Heart right ventricle (tissue), 16 donors: ENCODE measurements at regions of chr1 and their contacts with region 1.

Region 1: DNA sequence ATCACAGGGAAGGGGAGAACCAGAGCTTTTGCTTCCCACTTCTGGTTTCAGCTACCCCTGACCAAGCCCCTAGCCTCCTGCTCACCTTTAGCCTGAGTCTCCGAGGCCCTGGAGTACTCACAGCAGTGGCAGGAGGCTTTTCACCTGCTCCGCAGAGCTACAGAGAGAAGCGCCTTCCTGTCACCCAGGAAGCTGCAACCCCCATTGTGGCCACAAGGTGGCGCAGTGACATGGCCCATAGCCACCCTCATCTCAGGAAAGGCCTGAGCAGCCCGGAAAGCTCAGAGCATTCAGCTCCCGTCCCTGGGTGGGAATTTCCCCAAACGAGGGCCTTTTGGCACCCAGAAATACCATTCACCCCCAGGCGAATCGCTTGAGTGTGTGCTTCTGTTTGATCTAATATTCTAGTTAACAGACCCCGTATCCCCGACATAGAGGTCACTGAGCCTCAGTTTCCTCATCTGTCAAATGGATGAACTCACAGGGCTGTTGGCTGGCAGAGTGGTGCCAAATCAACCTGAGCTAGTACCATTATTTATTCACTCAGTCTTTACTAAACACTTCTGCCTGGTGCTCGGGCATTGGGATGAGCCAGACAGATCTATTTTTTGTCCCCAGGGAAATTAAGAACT is 25.3 kb downstream of the A3GALT2 start:
- DNase-seq: peak; percentile 85 to 89
- ATAC-seq: peak; percentile 73 to 93 (median 84)
- H3K4me3 ChIP-seq: no peak overlapping the region
- H3K27ac ChIP-seq: peak overlapping the region in 4 of 10 donors; percentile 13 to 24 (median 15)
- H3K4me1 ChIP-seq: peaks cover 0 to 27% (median 17%) of the 10 kb centered on the region in 9 donors
- H3K27me3 ChIP-seq: no peaks in the 10 kb centered on the region
- CTCF ChIP-seq: peak; percentile 88 to 99 (median 96)

Region 2: GRCh38 chr1:33219881-33220661 is 75.5 kb before region 1 on chr1:
- intact Hi-C with region 1: loop called in 8 of 10 experiments (anchors 1 to 10 kb)
- DNase-seq: no peak
- ATAC-seq: peak in 4 of 8 donors; percentile 30 to 46 (median 44)
- H3K4me3 ChIP-seq: no peak overlapping the region
- H3K27ac ChIP-seq: peak overlapping the region in 2 of 10 donors; percentile 2 to 15
- H3K4me1 ChIP-seq: peaks cover 0 to 25% (median 6%) of the 10 kb centered on the region in 9 donors
- H3K27me3 ChIP-seq: no peaks in the 10 kb centered on the region
- CTCF ChIP-seq: no peak

Region 3: GRCh38 chr1:33349778-33350610 is 54.4 kb after region 1 on chr1:
- intact Hi-C with region 1: loop called in 1 of 10 experiments (anchors 5 kb)
- DNase-seq: peak; percentile 85 to 90
- ATAC-seq: peak; percentile 90 to 93 (median 92)
- H3K4me3 ChIP-seq: peak overlapping the region; percentile 33 to 96 (median 66)
- H3K27ac ChIP-seq: peak overlapping the region; percentile 87 to 100 (median 99)
- H3K4me1 ChIP-seq: peaks cover 11 to 48% (median 41%) of the 10 kb centered on the region in 9 donors
- H3K27me3 ChIP-seq: no peaks in the 10 kb centered on the region
- CTCF ChIP-seq: peak in 1 of 9 donors; percentile 26

Region 4: GRCh38 chr1:33466159-33466558 is 170.6 kb after region 1 on chr1:
- intact Hi-C with region 1: loop called in 9 of 10 experiments (anchors 1 to 5 kb)
- DNase-seq: peak in 1 of 2 donors; percentile 60
- ATAC-seq: peak in 4 of 8 donors; percentile 12 to 57 (median 38)
- H3K4me3 ChIP-seq: no peak overlapping the region
- H3K27ac ChIP-seq: peak overlapping the region in 2 of 10 donors; percentile 14 to 15
- H3K4me1 ChIP-seq: peaks cover 0 to 47% (median 28%) of the 10 kb centered on the region in 9 donors
- H3K27me3 ChIP-seq: no peaks in the 10 kb centered on the region
- CTCF ChIP-seq: no peak

Region 5: GRCh38 chr1:33606272-33606671 is 310.7 kb after region 1 on chr1:
- intact Hi-C with region 1: loop called in 6 of 10 experiments (anchors 5 to 10 kb)
- DNase-seq: peak; percentile 33 to 75
- ATAC-seq: peak; percentile 56 to 93 (median 76)
- H3K4me3 ChIP-seq: no peak overlapping the region
- H3K27ac ChIP-seq: peak overlapping the region in 8 of 10 donors; percentile 29 to 79 (median 69)
- H3K4me1 ChIP-seq: peaks cover 0 to 44% (median 13%) of the 10 kb centered on the region in 9 donors
- H3K27me3 ChIP-seq: no peaks in the 10 kb centered on the region
- CTCF ChIP-seq: no peak